K562 (cell line): ENCODE measurements at regions of chr6 and their contacts with region 1.

Region 1: DNA sequence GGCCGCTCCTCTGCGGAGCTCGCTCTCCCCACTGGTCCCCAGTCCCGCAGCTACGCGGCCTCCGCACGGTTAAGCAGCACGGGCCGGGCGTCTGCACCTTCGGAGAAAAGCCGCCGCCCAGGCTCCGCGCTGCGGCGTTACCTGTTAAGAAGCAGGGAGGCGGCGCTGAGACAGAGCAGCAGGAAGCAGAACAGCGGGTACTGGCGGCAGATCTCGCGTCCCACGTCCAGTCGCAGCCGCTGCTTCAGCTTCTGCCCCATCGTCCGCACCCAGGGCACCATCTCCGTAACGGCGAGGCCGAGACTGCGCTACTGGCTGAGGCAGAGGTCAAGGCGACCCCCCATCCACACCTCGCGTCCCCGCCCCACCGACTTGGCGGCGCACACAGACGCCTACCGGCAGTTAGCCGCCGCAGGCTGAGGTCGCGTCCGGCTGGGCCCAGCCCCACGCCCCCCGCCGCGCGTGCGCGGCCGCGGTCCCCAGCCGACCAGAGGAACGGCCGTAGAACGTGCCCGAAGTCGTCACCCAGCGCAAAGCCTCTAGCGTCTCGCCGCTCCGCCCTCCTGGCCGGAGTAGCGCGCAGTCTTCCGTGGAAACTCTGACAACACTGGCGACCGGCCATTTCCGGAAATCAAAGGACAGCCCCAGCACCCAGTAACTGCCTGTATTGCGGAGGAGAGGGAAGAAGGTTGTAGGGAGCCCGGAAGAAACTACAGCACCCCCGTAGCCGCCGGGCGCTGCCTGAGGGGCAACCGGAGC is at the start of gene SNX14:
- DNase-seq: peak; percentile 88 to 96 (median 90)
- ATAC-seq: peak; percentile 93
- H3K4me3 ChIP-seq: peak within 1 kb of the TSS; percentile 92
- H3K27ac ChIP-seq: peak within 1 kb of the TSS; percentile 97
- H3K4me1 ChIP-seq: peaks cover 13 to 16% of the 10 kb centered on the region in 2 experiments; a peak in 3 of 5 replicates
- H3K27me3 ChIP-seq: no peaks in the 10 kb centered on the region
- CTCF ChIP-seq: no peak; a peak in 1 of 6 replicates
- EP300 ChIP-seq: peak; percentile 30; the same call in 1 of the 2 replicates
- POLR2A ChIP-seq: peak; percentile 88
- RAD21 ChIP-seq: peak in 1 of 2 experiments; percentile 8; a peak in 1 of 4 replicates
- polyA plus RNA-seq, gene SNX14: 46.5 to 61.1 TPM

Region 2: GRCh38 chr6:85580882-85581267 is 12.7 kb before region 1 on chr6:
- CTCF ChIA-PET with region 1: no interaction called
- POLR2A ChIA-PET with region 1: interaction called, 14 read pairs
- in situ Hi-C with region 1: no loop called
- intact Hi-C with region 1: no loop called
- DNase-seq: peak; percentile 41 to 89 (median 54)
- ATAC-seq: peak; percentile 97
- H3K4me3 ChIP-seq: no peak overlapping the region
- H3K27ac ChIP-seq: peak overlapping the region; percentile 81
- H3K4me1 ChIP-seq: peaks cover 8 to 26% of the 10 kb centered on the region in 2 experiments
- H3K27me3 ChIP-seq: no peaks in the 10 kb centered on the region
- CTCF ChIP-seq: 0 out of 6 replicates have a peak, but pooled peaks of 1 of the 3 experiments have one; percentile 5
- EP300 ChIP-seq: peak; percentile 37; the same call in 1 of the 2 replicates
- POLR2A ChIP-seq: no peak
- RAD21 ChIP-seq: no peak; a peak in 1 of 4 replicates

Region 3: DNA sequence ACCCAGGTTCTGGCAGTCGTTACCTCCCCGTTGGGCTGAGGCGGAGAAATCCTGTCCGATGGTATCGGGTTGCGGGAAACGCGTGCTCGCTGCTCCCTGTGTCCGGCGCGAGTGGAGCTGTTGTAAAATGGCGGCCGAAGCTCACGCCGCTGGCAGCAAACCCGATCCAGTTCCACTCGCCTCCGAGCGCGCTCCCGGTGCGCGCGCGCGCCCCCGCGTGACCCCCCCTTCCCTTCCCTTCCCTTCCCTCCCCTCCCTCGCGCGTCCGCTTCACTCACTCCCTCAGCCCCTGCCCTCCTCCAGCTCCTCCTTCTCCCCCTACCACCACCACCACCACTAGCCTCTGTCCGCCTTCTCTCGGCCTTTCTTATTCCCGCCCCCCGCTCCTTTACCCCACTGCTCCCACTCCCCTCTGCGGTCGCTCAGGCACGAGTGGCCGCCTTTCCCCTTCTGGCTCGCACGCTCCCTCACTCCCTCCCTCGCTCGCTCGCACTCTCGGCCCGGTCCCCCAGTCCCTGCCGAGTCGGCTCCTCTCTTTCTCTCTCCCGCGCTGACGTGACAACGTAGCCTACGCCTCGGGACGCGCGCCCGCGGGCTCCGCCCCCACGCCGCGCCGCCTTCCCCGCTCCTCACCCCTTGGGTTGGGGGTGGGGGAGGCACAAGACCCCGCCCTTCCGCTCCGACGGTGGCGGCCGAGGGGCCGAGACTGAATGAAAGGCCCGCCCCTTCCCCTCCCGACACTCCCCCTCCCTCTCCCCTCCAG is 49.3 kb after region 1 on chr6 and contains the start of gene SYNCRIP:
- CTCF ChIA-PET with region 1: no interaction called
- POLR2A ChIA-PET with region 1: interaction called, 5 read pairs
- in situ Hi-C with region 1: no loop called
- intact Hi-C with region 1: loop called (anchors 2 kb)
- DNase-seq: peak; percentile 71 to 98 (median 90)
- ATAC-seq: peak; percentile 86
- H3K4me3 ChIP-seq: peak within 1 kb of the TSS; percentile 87
- H3K27ac ChIP-seq: peak within 1 kb of the TSS; percentile 98
- H3K4me1 ChIP-seq: peaks cover 13 to 19% of the 10 kb centered on the region in 2 experiments; a peak in 4 of 5 replicates
- H3K27me3 ChIP-seq: no peaks in the 10 kb centered on the region
- CTCF ChIP-seq: no peak
- EP300 ChIP-seq: peak; percentile 19; the same call in 1 of the 2 replicates
- POLR2A ChIP-seq: peak; percentile 99
- RAD21 ChIP-seq: no peak
- polyA plus RNA-seq, gene SYNCRIP: 124 to 140 TPM

Region 4: DNA sequence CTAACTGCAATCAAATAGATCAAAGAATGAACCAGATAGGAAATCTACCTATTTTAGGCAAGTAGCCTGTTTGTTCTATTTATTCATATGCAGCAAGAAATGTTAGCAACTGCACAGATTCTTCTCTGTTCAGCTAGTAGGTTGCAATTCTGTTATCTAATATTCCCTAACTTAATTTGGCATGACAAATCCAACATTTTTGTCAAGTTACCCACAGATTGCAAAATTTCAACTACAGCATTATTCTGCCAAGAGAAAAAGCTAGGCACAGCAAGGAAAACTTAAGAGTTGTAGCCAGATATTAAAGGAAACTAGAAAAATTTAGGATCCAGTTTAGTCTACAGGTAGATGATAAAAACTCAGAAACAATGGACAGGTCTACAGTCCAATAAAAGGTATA is 153.5 kb after region 1 on chr6:
- CTCF ChIA-PET with region 1: no interaction called
- POLR2A ChIA-PET with region 1: no interaction called
- in situ Hi-C with region 1: no loop called
- intact Hi-C with region 1: no loop called
- DNase-seq: no peak
- ATAC-seq: no peak
- H3K4me3 ChIP-seq: no peak overlapping the region
- H3K27ac ChIP-seq: no peak overlapping the region
- H3K4me1 ChIP-seq: no peaks in the 10 kb centered on the region
- H3K27me3 ChIP-seq: peaks cover 0 to 6% of the 10 kb centered on the region in 2 experiments; a peak in 1 of 5 replicates
- CTCF ChIP-seq: no peak
- EP300 ChIP-seq: no peak
- POLR2A ChIP-seq: no peak
- RAD21 ChIP-seq: no peak

Region 5: DNA sequence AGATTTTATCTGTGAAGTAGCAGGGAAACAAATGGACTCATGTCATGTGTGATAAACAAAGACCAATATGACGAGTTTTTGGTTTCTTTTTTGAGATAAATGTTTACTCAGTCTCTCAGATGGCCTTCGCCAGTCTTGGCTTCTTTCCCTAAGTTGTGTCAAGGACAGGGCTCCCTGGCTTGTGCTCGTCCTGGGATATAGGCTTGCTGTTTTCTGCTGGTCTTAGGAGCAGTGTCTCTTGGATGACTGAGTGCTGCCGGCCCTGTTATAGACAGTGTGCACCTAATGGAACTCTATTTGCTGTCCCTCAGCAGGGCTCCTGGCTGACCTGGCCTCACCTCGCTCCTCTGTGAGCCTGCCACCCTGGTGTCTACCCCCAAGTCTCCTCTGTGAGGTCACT is 373.2 kb after region 1 on chr6:
- CTCF ChIA-PET with region 1: no interaction called
- POLR2A ChIA-PET with region 1: no interaction called
- in situ Hi-C with region 1: no loop called
- intact Hi-C with region 1: no loop called
- DNase-seq: no peak
- ATAC-seq: no peak
- H3K4me3 ChIP-seq: no peak overlapping the region
- H3K27ac ChIP-seq: no peak overlapping the region
- H3K4me1 ChIP-seq: no peaks in the 10 kb centered on the region
- H3K27me3 ChIP-seq: no peaks in the 10 kb centered on the region
- CTCF ChIP-seq: no peak
- EP300 ChIP-seq: no peak
- POLR2A ChIP-seq: no peak
- RAD21 ChIP-seq: no peak